ENCODE measurements at regions of chr5 and their contacts with region 1.

Region 1: DNA sequence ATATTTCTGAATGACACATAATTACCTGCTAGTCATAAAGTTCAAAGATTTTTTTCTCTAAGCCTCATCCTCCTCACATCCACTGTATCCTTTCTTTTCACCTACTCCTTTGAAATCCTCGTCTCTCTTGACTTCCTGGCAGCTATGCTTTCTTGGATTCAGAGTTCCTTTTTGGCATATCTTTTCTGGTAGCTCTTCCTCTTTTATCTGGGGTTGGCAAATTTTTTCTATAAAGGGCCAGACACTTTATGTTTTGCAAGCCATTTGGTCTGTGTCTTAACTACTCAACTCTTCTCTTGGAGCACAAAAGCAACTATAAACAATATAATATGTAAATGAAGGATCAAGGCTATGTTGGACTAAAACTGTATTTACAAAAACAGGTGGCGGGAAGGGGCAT is 197.5 kb downstream of the KIAA0825 start:
- DNase-seq: no peak
- H3K4me3 Mint-ChIP-seq: no peak overlapping the region
- H3K27ac Mint-ChIP-seq: no peak overlapping the region
- H3K4me1 Mint-ChIP-seq: peaks cover 12% of the 10 kb centered on the region
- H3K27me3 Mint-ChIP-seq: no peaks in the 10 kb centered on the region
- CTCF ChIP-seq: no peak

Region 2: GRCh38 chr5:94374336-94374735 is 46.5 kb before region 1 on chr5:
- CTCF ChIA-PET with region 1: no interaction called
- intact Hi-C with region 1: loop called (anchors 1 kb)
- DNase-seq: no peak
- H3K4me3 Mint-ChIP-seq: no peak overlapping the region
- H3K27ac Mint-ChIP-seq: no peak overlapping the region
- H3K4me1 Mint-ChIP-seq: no peaks in the 10 kb centered on the region
- H3K27me3 Mint-ChIP-seq: no peaks in the 10 kb centered on the region
- CTCF ChIP-seq: no peak

Region 3: DNA sequence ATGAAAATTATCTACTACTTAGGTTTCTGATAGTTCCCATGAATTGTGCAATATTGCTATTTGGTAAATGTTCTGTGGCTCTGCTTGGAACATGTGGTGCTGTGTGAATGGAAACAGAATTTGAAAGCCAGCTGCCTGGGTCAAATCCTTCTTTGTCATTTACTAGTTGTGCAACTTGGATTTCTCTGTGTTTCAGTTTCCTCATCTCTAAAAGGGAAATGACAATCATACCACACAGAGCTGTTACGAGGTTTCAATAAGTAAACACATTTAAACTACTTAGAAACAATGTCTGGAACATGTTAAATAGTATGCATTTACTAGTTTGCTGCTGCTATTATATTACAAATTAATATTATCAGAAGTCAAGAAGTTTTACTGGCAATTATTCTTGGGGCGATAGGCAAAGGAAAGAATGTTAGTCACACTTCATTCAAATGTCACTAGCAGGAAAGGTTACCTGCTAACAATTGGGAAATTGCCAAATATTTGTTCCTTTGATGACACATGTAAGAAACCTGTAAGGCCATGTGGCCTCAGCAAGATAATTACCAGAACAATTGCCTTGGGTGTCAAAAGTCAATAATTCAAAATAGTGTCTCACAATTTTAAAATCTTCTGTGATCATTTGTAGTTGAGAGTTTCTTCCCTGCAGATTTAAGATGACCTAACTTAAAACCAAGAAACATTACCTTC is 12.7 kb after region 1 on chr5:
- CTCF ChIA-PET with region 1: no interaction called
- intact Hi-C with region 1: no loop called
- DNase-seq: peak; percentile 25
- H3K4me3 Mint-ChIP-seq: no peak overlapping the region
- H3K27ac Mint-ChIP-seq: no peak overlapping the region
- H3K4me1 Mint-ChIP-seq: peaks cover 25% of the 10 kb centered on the region
- H3K27me3 Mint-ChIP-seq: no peaks in the 10 kb centered on the region
- CTCF ChIP-seq: no peak

Region 4: DNA sequence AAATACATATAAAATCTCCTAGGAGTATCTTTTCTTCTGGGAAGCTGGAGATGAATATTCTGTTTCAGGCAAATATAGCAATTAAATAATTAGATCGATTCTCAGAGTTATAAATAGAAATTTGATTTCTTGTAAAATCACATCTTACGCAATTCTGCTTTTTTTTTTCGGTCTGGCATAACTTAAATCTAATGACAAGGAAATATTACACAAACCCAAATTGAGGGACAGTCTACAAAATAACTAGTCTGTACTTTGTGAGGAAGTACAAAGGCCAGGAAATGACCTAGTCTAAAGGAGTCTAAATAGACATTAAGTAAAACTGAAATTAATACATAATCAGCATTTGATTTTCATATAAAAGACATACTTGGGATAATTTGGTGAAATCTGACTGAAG is 64.2 kb after region 1 on chr5:
- CTCF ChIA-PET with region 1: no interaction called
- intact Hi-C with region 1: no loop called
- DNase-seq: no peak
- H3K4me3 Mint-ChIP-seq: no peak overlapping the region
- H3K27ac Mint-ChIP-seq: no peak overlapping the region
- H3K4me1 Mint-ChIP-seq: no peaks in the 10 kb centered on the region
- H3K27me3 Mint-ChIP-seq: no peaks in the 10 kb centered on the region
- CTCF ChIP-seq: no peak

Measured in Calu3 (cell line).